ENCODE measurements at regions of chr1 and their contacts with region 1.

Region 1: DNA sequence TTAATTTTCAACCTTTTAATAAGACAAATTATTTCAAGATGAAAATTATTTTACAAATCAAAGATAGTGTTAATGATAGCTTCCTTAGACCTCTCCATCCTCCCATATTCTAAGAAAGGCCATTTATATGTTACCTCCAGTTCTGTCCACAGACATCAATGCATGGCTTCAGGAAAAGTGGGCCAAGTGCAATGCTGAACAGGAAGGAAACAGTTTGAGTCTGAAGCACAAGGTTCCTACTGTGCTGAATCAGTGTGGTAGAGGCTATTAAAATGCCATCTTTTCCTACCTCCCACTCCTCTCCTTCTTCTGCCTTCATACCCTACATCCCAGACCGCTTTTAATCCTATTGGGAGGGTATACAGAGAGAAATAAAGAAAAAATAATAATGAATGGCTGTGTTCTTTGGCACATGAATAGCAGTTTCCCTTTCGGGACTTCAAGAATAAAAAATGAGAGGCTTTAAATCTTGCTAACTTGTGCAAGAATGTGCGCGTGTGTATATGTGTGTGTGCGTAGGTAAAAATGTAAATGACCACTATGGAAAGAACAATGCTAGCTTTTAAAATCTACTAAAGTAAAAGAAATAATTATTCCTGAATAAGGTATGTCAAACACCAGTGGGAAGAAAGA is 62.6 kb upstream of the C1orf105 start:
- DNase-seq: no peak
- H3K4me3 Mint-ChIP-seq: no peak overlapping the region
- H3K27ac Mint-ChIP-seq: peak overlapping the region; percentile 86
- H3K4me1 Mint-ChIP-seq: peaks cover 41% of the 10 kb centered on the region
- H3K27me3 Mint-ChIP-seq: no peaks in the 10 kb centered on the region

Region 2: GRCh38 chr1:172254521-172255222 is 103.2 kb before region 1 on chr1:
- CTCF ChIA-PET with region 1: no interaction called
- DNase-seq: no peak
- H3K4me3 Mint-ChIP-seq: no peak overlapping the region
- H3K27ac Mint-ChIP-seq: peak overlapping the region; percentile 74
- H3K4me1 Mint-ChIP-seq: peaks cover 20% of the 10 kb centered on the region
- H3K27me3 Mint-ChIP-seq: no peaks in the 10 kb centered on the region

Region 3: GRCh38 chr1:172378109-172378760 is 20.4 kb after region 1 on chr1:
- CTCF ChIA-PET with region 1: interaction called, 15 read pairs
- DNase-seq: no peak
- H3K4me3 Mint-ChIP-seq: no peak overlapping the region
- H3K27ac Mint-ChIP-seq: no peak overlapping the region
- H3K4me1 Mint-ChIP-seq: peaks cover 42% of the 10 kb centered on the region
- H3K27me3 Mint-ChIP-seq: no peaks in the 10 kb centered on the region